ENCODE measurements at regions of chr9 and their contacts with region 1.

Region 1: DNA sequence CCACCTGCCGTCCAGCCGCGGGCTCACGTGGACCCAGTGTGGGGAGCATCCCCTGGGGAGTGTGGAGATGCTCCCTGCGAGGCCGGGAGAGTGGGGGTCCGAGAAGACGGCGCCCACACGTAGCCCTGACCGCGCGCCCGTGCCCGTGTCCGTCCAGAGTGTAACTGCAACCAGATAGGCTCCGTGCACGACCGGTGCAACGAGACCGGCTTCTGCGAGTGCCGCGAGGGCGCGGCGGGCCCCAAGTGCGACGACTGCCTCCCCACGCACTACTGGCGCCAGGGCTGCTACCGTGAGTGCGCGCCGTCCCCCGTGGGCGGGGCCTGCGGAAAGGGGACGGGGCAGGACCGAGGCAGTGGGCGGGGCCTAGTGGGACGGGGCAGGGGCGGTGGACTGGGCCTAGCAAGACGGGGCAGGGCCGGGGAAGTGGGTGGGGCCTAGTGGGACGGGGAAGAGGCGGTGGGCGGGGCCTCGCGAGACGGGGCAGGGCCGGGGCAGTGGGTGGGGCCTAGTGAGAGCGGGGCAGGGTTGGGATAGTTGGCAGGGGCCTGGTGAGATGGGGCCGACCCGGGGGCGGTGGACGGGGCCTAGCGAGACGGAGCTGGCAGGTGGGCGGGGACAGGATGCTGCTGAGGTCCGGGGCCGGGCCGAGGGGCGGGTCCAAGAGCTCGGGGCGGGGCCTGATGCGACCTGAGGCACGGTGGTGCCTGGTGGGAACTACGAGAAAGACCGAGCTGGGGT is 79.1 kb downstream of the NTNG2 start:
- DNase-seq: peak; percentile 99
- H3K4me3 Mint-ChIP-seq: peak overlapping the region; percentile 93
- H3K27ac Mint-ChIP-seq: peak overlapping the region; percentile 45
- H3K4me1 Mint-ChIP-seq: peaks cover 8% of the 10 kb centered on the region
- H3K27me3 Mint-ChIP-seq: peaks cover 6% of the 10 kb centered on the region

Region 2: DNA sequence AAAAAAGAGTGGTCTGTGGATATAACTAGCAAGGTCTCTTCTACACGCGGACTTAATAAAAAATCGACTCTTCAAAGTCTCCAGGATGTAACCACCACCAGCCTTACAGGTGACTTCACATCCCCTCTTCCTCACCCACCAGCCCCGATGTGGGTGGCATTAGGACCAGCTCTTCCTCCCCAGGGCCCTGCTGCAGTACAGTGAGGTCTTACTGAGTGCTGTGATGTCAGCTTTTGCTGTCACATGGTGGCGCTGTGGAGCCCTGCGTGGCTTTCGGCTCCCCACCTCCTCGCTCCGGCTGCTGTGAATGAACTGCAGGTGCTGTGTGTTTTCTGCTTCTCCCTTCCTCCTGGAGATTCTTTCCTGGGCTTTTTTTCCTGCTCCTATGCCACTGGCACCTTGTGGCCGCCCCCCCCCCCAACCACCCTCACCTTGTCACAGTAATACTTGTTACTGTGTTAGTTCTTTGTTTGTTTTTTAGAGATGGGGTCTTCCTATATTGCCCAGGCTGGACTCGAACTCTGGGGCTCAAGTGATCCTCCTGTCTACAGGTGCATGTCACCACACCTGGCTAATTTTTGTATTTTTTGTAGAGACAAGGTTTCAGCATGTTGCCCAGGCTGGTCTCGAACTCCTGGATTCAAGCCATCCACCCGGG is 485.3 kb before region 1 on chr9:
- CTCF ChIA-PET with region 1: interaction called, 151 read pairs
- POLR2A ChIA-PET with region 1: interaction called, 4 read pairs
- intact Hi-C with region 1: loop called (anchors 2 kb)
- DNase-seq: peak; percentile 92
- H3K4me3 Mint-ChIP-seq: peak overlapping the region; percentile 27
- H3K27ac Mint-ChIP-seq: peak overlapping the region; percentile 57
- H3K4me1 Mint-ChIP-seq: peaks cover 18% of the 10 kb centered on the region
- H3K27me3 Mint-ChIP-seq: peaks cover 8% of the 10 kb centered on the region

Region 3: DNA sequence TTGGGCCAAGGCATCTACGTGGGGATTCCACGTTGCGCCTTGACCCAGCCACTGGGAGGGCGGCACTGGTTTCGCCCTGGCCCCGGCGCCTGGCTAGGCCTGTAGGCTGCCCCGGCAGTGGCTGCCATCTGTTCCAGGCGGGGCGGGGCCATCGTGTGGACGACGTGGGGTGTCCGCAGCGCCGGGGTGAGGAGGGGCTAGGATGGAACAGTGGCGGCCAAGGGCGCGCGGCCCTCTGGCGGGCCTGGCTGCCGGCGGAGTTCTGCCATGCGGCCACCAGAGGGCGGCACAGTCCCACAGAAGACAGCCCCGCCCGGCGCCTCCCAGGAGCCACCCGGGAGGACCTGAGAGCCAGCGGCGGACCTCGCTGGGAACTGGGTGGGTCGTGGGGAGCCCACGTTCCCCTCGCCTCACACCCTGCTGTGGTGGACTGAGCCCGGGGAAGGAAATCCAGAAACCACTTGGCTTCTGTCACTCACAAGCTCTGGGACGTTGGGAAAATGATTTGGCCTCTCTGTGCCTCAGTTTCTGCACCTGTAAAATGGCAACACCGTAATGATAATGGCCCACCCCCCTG is 478.5 kb before region 1 on chr9:
- CTCF ChIA-PET with region 1: interaction called, 151 read pairs
- POLR2A ChIA-PET with region 1: interaction called, 4 read pairs
- intact Hi-C with region 1: loop called (anchors 1 kb)
- DNase-seq: peak; percentile 83
- H3K4me3 Mint-ChIP-seq: no peak overlapping the region
- H3K27ac Mint-ChIP-seq: no peak overlapping the region
- H3K4me1 Mint-ChIP-seq: peaks cover 14% of the 10 kb centered on the region
- H3K27me3 Mint-ChIP-seq: peaks cover 7% of the 10 kb centered on the region

Region 4: GRCh38 chr9:132169672-132170392 is 71.1 kb before region 1 on chr9:
- CTCF ChIA-PET with region 1: interaction called, 179 read pairs
- POLR2A ChIA-PET with region 1: no interaction called
- intact Hi-C with region 1: loop called (anchors 1 kb)
- DNase-seq: peak; percentile 64
- H3K4me3 Mint-ChIP-seq: no peak overlapping the region
- H3K27ac Mint-ChIP-seq: no peak overlapping the region
- H3K4me1 Mint-ChIP-seq: no peaks in the 10 kb centered on the region
- H3K27me3 Mint-ChIP-seq: peaks cover 40% of the 10 kb centered on the region

Region 5: DNA sequence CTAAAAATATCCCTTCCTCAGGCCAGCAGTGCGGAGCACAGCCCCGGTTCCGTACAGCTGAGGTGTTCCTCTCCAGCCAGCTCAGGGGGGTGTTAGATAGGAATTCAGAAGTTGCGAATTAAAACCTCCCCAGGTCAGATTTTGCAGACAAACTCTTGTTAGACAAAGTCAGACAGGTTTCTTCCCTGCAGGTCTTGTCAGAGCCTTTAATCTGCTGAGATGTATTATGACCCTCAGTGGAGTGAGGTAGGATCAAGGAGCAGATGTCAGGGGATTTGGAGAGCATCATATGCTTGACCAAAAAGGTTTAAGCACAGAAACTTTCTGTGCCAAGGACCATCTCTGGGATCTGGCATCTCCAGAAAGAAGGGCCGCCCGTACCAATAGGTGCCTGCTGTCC is 19.0 kb before region 1 on chr9:
- CTCF ChIA-PET with region 1: interaction called, 11 read pairs
- POLR2A ChIA-PET with region 1: no interaction called
- intact Hi-C with region 1: no loop called
- DNase-seq: no peak
- H3K4me3 Mint-ChIP-seq: no peak overlapping the region
- H3K27ac Mint-ChIP-seq: no peak overlapping the region
- H3K4me1 Mint-ChIP-seq: no peaks in the 10 kb centered on the region
- H3K27me3 Mint-ChIP-seq: peaks cover 5% of the 10 kb centered on the region

Region 6: DNA sequence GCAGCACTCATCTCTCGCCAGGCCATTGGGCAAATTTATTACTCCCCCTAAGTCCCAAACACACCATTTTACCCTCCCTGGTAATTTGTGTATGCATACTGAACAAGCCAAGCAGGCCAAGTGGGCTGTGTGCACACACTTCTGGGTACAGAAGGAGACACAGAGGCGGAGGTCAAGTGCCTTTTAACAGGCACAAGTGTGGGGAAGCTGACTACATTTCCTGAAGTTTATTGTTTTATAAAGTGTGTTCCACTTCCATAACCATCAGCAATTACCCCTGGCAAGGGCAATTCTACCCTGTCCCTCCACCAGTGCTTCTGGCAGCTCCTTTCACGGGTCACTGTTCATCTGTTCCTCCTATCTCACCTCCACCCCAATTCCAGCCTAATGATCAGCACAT is 19.9 kb after region 1 on chr9:
- CTCF ChIA-PET with region 1: interaction called, 13 read pairs
- POLR2A ChIA-PET with region 1: no interaction called
- intact Hi-C with region 1: loop called (anchors 2 kb)
- DNase-seq: no peak
- H3K4me3 Mint-ChIP-seq: no peak overlapping the region
- H3K27ac Mint-ChIP-seq: no peak overlapping the region
- H3K4me1 Mint-ChIP-seq: peaks cover 8% of the 10 kb centered on the region
- H3K27me3 Mint-ChIP-seq: no peaks in the 10 kb centered on the region

Region 7: GRCh38 chr9:132268725-132269352 is 27.9 kb after region 1 on chr9:
- CTCF ChIA-PET with region 1: interaction called, 13 read pairs
- POLR2A ChIA-PET with region 1: no interaction called
- intact Hi-C with region 1: no loop called
- DNase-seq: peak; percentile 82
- H3K4me3 Mint-ChIP-seq: no peak overlapping the region
- H3K27ac Mint-ChIP-seq: peak overlapping the region; percentile 77
- H3K4me1 Mint-ChIP-seq: peaks cover 7% of the 10 kb centered on the region
- H3K27me3 Mint-ChIP-seq: no peaks in the 10 kb centered on the region